ENCODE measurements at regions of chr1 and their contacts with region 1.

Region 1: DNA sequence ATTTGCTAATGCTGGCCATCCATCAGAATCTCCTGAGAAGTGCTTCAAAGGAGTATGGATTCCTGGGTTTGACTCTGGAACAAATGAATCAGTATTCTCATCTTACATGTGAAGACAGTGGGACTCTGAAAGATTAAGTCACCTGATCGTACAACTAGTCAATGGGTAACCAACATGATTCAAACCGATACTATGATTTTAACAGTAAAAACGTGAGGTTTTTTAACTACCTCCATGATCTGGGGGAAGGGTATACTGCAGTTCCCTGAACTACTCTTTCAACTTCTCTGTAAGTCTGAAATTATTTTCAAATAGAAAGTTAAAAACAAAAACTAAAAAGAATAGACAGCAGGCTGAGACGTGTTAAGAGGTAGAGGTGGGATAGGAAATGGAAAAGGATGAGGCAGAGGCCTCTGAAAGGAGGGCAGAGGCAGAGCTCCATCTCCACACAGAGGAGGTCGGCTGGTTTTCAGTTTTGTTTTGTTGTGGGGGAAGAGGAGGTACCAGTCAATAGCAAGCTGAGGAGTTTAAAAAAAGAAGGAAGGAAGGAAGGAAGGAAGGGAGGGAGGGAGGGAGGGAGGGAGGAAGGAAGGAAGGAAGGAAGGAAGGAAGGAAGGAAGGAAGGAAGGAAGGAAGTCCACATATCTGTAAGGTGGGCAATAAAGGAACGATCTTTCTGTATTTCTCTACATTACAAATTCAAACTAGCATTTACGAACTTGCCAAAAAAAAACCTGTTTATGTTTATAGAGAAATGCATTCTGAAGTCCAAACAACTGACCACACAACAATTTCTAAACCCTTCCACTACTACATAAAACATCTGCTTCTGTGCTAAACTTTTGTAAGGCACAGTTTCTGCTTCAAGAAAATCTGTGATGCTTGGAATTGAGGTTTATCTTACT is 213.1 kb downstream of the RERE start:
- DNase-seq: peak; percentile 85
- H3K4me3 Mint-ChIP-seq: peak overlapping the region; percentile 75
- H3K27ac Mint-ChIP-seq: peak overlapping the region; percentile 93
- H3K4me1 Mint-ChIP-seq: peaks cover 33% of the 10 kb centered on the region
- H3K27me3 Mint-ChIP-seq: no peaks in the 10 kb centered on the region

Region 2: GRCh38 chr1:8423650-8424538 is 180.4 kb before region 1 on chr1:
- intact Hi-C with region 1: loop called (anchors 5 kb)
- DNase-seq: peak; percentile 83
- H3K4me3 Mint-ChIP-seq: peak overlapping the region; percentile 86
- H3K27ac Mint-ChIP-seq: peak overlapping the region; percentile 90
- H3K4me1 Mint-ChIP-seq: peaks cover 40% of the 10 kb centered on the region
- H3K27me3 Mint-ChIP-seq: no peaks in the 10 kb centered on the region

Region 3: DNA sequence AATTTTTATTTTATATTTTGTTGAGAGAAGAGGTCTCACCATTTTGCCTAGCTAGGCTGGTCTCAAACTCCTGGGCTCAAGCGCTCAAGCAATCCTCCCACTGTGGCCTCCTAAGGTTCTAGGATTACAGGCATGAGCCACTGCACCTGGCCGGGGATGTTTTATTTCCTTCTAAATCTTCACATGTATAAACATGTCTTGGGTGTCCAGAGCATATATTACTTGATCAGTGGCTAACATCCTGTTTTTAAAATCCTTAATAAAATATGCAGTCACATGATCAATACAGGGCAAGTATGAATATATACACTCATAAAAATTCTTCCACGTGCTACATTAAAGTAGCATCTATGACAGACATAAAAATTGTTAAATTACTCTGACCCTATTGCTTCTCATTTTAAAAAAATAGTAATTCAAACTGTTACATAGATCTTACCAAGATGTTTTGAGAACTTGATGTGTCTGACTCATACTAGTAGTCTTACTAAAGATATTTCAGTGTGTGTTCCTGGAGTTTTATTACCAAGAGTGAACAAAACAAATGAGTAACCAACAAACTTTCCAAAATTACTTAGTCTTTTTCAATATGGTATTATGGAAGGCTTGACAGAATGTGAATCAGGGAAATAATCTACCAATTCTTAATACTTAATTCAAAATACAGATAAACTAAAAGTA is 63.9 kb before region 1 on chr1:
- intact Hi-C with region 1: loop called (anchors 5 kb)
- DNase-seq: no peak
- H3K4me3 Mint-ChIP-seq: peak overlapping the region; percentile 67
- H3K27ac Mint-ChIP-seq: peak overlapping the region; percentile 92
- H3K4me1 Mint-ChIP-seq: peaks cover 41% of the 10 kb centered on the region
- H3K27me3 Mint-ChIP-seq: no peaks in the 10 kb centered on the region

Region 4: DNA sequence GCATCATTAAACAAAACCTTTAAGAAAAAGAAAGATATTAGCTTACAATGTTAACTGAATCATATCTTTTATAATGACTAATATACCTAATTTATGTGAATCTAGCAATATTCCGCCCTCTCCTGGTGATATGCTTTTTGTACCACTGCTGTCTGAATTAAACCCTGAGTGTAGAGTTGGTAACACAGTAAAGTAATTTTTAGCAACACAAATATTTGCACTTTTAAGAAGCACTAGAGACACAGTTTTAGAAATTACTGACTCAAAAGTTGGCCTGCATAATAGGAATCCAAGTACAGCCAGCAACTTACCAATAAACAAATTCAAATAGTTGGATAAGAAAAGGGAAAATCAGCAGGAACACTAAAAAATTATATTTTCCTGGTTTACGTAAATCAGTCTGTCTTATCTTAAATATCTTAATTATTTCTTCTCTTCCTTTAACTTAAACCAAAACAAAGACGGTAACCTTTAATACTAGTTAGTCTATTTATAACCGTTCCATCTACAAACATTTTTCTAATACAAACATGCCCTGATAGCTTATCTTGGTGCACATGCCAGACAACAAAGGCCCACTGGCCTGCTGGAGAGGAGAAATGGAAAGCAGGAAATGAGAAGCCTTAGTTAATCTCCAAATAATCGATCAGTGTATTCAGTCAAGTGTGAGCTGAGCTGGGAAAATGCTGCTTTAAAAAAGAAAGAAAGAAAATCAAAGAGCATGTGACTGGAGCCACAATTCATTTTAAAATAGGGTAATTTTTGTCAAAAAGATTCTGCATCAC is 32.9 kb before region 1 on chr1:
- intact Hi-C with region 1: no loop called
- DNase-seq: no peak
- H3K4me3 Mint-ChIP-seq: no peak overlapping the region
- H3K27ac Mint-ChIP-seq: no peak overlapping the region
- H3K4me1 Mint-ChIP-seq: peaks cover 3% of the 10 kb centered on the region
- H3K27me3 Mint-ChIP-seq: no peaks in the 10 kb centered on the region

Region 5: DNA sequence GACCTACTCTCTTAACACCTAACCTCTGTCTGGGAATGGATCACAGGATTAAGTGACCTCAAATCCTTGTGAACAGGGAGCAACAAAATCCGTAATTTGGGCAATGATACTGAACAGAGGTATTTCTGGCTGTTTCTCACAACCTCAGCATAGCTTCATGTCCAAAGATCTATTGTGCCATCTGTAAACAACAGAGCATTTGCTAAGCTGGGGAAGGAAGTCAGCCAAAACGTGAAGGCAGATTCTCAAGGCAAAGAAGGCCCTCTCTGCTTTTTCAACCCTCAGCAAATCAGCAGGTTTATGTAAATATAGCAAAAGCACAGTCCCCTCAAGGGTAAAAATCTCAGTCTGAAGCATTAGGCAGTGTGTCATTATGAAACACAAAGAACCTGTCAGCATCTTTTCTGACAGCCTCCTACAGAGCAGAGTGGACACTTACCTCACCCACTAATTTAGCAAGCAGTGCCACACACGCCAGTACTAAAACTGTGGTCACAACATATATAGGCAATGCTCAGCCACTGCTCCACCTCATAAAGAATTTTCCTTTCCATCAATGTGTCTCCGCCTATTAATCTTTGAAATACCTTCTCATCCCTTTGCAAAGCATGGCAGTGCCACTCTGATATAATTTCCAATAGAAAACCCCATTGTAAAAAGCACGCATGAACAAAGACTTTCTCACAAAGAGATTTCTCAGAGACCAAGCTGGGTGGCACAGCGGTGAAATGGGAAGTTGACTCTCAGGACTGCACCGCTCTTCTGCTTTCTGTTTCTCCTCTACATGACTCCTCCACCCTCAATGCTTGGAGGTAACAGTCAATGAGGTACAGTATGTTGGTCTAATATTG is 25.2 kb after region 1 on chr1:
- intact Hi-C with region 1: loop called (anchors 2 kb)
- DNase-seq: no peak
- H3K4me3 Mint-ChIP-seq: peak overlapping the region; percentile 31
- H3K27ac Mint-ChIP-seq: peak overlapping the region; percentile 50
- H3K4me1 Mint-ChIP-seq: peaks cover 45% of the 10 kb centered on the region
- H3K27me3 Mint-ChIP-seq: no peaks in the 10 kb centered on the region

Region 6: GRCh38 chr1:8660411-8660828 is 56.1 kb after region 1 on chr1:
- intact Hi-C with region 1: loop called (anchors 1 kb)
- DNase-seq: no peak
- H3K4me3 Mint-ChIP-seq: no peak overlapping the region
- H3K27ac Mint-ChIP-seq: no peak overlapping the region
- H3K4me1 Mint-ChIP-seq: peaks cover 7% of the 10 kb centered on the region
- H3K27me3 Mint-ChIP-seq: no peaks in the 10 kb centered on the region

Region 7: GRCh38 chr1:8763888-8764287 is 159.6 kb after region 1 on chr1:
- intact Hi-C with region 1: no loop called
- DNase-seq: no peak
- H3K4me3 Mint-ChIP-seq: no peak overlapping the region
- H3K27ac Mint-ChIP-seq: no peak overlapping the region
- H3K4me1 Mint-ChIP-seq: peaks cover 6% of the 10 kb centered on the region
- H3K27me3 Mint-ChIP-seq: no peaks in the 10 kb centered on the region